ENCODE measurements at regions of chr17 and their contacts with region 1.

Region 1: GRCh38 chr17:63697341-63698286 is 2.3 kb downstream of the LIMD2 start:
- DNase-seq: peak; percentile 91
- ATAC-seq: peak; percentile 35
- H3K4me3 Mint-ChIP-seq: peak overlapping the region; percentile 96
- H3K27ac Mint-ChIP-seq: peak overlapping the region; percentile 98
- H3K4me1 Mint-ChIP-seq: peaks cover 59% of the 10 kb centered on the region
- H3K27me3 Mint-ChIP-seq: no peaks in the 10 kb centered on the region

Region 2: DNA sequence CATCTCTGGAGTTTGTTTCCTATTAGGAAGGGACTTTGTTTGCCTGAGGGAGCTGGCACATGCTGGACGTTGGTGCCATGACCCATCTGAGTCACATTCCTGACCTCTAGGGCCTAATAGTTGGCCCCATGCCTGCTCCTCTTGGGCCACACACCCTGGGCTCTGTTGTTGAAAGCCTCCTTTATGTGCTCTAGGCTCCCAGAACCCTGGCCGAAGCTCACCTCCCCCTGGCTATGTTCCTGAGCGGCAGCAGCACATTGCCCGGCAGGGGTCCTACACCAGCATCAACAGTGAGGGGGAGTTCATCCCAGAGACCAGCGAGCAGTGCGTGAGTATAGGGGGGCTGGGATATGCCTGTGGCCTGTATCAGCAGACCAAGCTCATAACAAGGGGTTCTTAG is 16.0 kb before region 1 on chr17:
- CTCF ChIA-PET with region 1: interaction called, 5 read pairs
- POLR2A ChIA-PET with region 1: interaction called, 13 read pairs
- DNase-seq: no peak
- ATAC-seq: no peak
- H3K4me3 Mint-ChIP-seq: no peak overlapping the region
- H3K27ac Mint-ChIP-seq: no peak overlapping the region
- H3K4me1 Mint-ChIP-seq: no peaks in the 10 kb centered on the region
- H3K27me3 Mint-ChIP-seq: no peaks in the 10 kb centered on the region

Region 3: DNA sequence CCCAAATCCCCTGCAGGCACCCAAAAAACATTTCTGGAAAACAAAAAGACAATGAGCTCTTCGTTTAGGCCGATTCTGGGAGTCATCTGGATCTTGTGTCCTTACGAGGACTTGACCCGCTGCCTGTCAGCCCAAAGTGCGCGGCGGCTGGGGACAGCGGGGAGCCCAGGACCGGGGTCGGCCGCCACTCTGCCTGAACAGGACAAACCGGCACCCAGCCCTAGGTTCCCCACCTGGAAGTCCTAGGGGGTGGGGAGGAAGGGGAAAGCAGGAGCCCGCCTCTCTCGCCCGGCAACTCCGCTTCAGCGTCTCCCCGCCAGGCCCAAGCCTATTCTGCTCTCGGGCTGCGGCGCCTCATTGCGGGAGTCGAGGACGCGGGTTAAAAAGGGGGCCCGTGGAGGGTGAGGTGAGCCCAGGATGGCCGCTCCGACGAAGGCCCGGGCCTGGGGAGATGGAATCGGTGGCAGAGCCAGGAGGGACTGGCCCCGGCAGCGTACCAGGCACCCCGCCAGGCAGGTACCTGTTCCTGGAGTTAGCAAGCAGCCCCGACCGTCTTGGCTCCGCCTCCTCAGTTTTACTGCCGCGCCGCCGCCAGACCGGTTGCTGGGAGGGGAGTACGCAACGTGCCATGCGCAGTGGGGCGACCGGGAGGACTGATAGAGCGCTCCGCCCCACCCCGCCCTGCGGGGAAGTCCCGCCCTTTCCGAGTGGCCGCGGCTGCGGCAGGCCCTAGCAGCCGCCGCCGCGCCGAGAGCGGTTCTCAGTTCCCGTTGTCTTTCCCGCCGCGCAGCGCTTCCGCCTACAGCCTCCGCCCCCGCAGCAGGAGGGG is 43.8 kb after region 1 on chr17 and contains the start of gene STRADA:
- CTCF ChIA-PET with region 1: interaction called, 8 read pairs
- POLR2A ChIA-PET with region 1: interaction called, 63 read pairs
- DNase-seq: peak; percentile 99
- ATAC-seq: peak; percentile 96
- H3K4me3 Mint-ChIP-seq: peak within 1 kb of the TSS; percentile 94
- H3K27ac Mint-ChIP-seq: peak within 1 kb of the TSS; percentile 92
- H3K4me1 Mint-ChIP-seq: peaks cover 41% of the 10 kb centered on the region
- H3K27me3 Mint-ChIP-seq: no peaks in the 10 kb centered on the region
- total RNA-seq, gene STRADA: 46.0 to 49.9 TPM

Region 4: DNA sequence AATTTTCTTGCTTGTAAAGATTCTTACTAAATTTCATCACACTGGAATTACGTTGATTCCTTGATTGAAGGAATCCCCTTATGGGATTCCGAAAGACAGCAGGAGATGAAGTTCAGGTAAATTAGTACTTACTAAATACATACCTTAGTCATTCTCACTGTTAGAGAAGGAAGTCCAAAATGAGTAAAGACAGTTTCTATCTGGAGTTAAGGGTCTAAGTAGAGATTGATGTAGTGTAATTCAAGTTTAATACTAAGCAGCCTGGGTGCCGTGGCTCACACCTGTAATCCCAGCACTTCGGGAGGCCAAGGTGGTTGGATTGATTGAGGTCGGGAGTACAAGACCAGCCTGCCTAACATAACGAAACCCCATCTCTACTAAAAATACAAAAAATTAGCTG is 85.9 kb after region 1 on chr17:
- CTCF ChIA-PET with region 1: interaction called, 3 read pairs
- POLR2A ChIA-PET with region 1: interaction called, 14 read pairs
- DNase-seq: no peak
- ATAC-seq: no peak
- H3K4me3 Mint-ChIP-seq: no peak overlapping the region
- H3K27ac Mint-ChIP-seq: no peak overlapping the region
- H3K4me1 Mint-ChIP-seq: peaks cover 39% of the 10 kb centered on the region
- H3K27me3 Mint-ChIP-seq: no peaks in the 10 kb centered on the region

Region 5: DNA sequence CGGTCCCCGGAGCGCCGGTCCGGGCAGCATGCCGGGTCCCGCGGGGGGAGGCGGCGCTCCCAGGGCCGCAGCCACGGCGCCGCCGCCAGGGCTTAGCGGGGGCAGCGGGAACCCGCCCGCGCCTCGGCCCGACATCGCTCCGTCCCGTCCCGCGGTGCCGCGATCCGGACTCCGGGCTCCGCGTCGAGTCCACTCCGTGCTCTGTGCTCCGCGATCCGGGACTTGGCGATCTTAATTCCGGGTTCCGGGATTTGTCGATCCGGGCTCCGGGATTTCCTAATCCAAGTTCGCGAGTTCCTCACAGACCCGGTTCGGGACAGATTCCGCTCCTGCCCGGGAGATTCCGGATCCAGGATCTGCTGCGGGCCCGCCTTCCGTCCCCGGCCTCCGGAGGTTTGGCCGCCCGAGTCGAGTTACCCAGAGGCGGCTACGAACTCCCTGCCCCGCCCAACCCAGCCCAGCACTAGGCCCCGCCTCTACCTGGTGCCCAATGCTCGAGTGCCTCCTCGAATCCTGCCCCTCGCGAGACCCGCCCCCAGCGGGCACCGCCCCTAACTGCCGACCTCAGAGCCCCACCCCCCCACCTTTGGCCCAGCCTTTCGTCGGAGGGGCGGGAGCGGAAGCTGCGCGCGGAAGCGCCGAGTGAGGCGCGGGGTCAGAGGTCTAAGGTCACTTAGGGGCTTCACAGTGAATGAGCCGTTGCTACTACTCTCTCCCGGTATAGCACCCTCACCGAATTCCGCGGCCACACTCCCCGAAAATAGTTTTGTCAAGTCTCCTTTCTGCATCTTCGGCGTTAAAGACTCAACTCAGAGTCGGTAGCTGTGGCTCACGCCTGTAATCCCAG is 145.1 kb after region 1 on chr17 and contains the start of gene SMARCD2:
- CTCF ChIA-PET with region 1: no interaction called
- POLR2A ChIA-PET with region 1: interaction called, 10 read pairs
- DNase-seq: peak; percentile 99
- ATAC-seq: peak; percentile 90
- H3K4me3 Mint-ChIP-seq: peak within 1 kb of the TSS; percentile 97
- H3K27ac Mint-ChIP-seq: peak within 1 kb of the TSS; percentile 94
- H3K4me1 Mint-ChIP-seq: peaks cover 36% of the 10 kb centered on the region
- H3K27me3 Mint-ChIP-seq: no peaks in the 10 kb centered on the region
- total RNA-seq, gene SMARCD2: 130 to 136 TPM

Region 6: GRCh38 chr17:63943745-63944144 is 246.1 kb after region 1 on chr17:
- CTCF ChIA-PET with region 1: no interaction called
- POLR2A ChIA-PET with region 1: no interaction called
- DNase-seq: no peak
- ATAC-seq: no peak
- H3K4me3 Mint-ChIP-seq: no peak overlapping the region
- H3K27ac Mint-ChIP-seq: no peak overlapping the region
- H3K4me1 Mint-ChIP-seq: peaks cover 26% of the 10 kb centered on the region
- H3K27me3 Mint-ChIP-seq: peaks cover 36% of the 10 kb centered on the region